ENCODE measurements at regions of chr2 and their contacts with region 1.

Region 1: GRCh38 chr2:219388127-219388844 is 574 bp upstream of the DNPEP start:
- DNase-seq: peak; percentile 100
- ATAC-seq: peak; percentile 81
- H3K4me3 Mint-ChIP-seq: peak overlapping the region; percentile 97
- H3K27ac Mint-ChIP-seq: peak overlapping the region; percentile 82
- H3K4me1 Mint-ChIP-seq: peaks cover 9% of the 10 kb centered on the region
- H3K27me3 Mint-ChIP-seq: no peaks in the 10 kb centered on the region

Region 2: GRCh38 chr2:218568190-218569037 is 819.9 kb before region 1 on chr2 and contains the starts of genes CNOT9 and USP37:
- CTCF ChIA-PET with region 1: no interaction called
- POLR2A ChIA-PET with region 1: no interaction called
- intact Hi-C with region 1: loop called (anchors 1 to 5 kb)
- DNase-seq: peak; percentile 100
- ATAC-seq: peak; percentile 92
- H3K4me3 Mint-ChIP-seq: peak within 1 kb of the TSS; percentile 96
- H3K27ac Mint-ChIP-seq: peak within 1 kb of the TSS; percentile 100
- H3K4me1 Mint-ChIP-seq: peaks cover 58% of the 10 kb centered on the region
- H3K27me3 Mint-ChIP-seq: no peaks in the 10 kb centered on the region
- total RNA-seq, gene CNOT9: 100 to 105 TPM
- total RNA-seq, gene USP37: 42.5 to 46.8 TPM

Region 3: DNA sequence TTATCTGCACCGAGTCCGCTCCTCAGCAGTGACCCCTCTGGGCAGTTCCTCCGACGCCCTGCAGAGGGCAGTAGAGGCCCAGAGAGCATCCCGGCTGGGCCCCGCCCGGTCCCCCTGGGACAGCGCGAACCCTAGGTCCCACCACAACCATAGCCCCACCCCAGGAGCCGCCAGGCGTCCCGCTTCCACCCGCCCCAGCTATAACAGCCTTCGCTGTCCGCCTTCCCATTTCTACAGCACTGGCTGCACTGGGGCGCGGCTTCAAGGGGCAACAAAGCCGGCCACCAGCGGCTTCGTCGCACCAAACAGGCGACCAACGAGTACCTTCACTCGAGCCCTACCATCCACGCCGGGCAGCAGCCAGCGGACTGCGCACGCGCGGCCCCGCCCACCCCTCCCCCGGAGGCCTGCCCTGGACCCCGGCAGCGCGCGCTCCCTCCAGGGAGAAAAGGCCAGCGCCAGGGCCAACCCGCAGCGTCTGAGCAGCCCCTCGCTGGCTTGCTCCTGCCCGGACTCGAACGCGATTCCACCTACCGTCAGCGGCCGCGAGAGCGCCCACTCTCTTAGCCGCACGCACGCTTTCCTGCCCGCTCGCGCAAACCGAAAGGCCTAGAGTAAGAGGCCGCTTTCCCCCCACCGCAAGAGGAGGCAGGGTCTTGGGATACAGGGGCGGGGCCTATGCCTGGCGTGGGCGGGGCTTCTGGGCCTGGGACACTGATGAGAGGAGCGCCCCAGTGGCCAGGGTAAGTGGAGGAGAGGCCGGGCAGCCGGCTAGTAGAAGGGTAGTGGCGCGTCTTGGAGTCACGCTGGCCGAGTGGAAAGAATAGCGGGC is 227.9 kb before region 1 on chr2 and contains the start of gene NHEJ1:
- CTCF ChIA-PET with region 1: interaction called, 3 read pairs
- POLR2A ChIA-PET with region 1: no interaction called
- intact Hi-C with region 1: loop called (anchors 1 to 2 kb)
- DNase-seq: peak; percentile 97
- ATAC-seq: peak; percentile 89
- H3K4me3 Mint-ChIP-seq: peak within 1 kb of the TSS; percentile 81
- H3K27ac Mint-ChIP-seq: peak within 1 kb of the TSS; percentile 88
- H3K4me1 Mint-ChIP-seq: peaks cover 13% of the 10 kb centered on the region
- H3K27me3 Mint-ChIP-seq: no peaks in the 10 kb centered on the region
- total RNA-seq, gene NHEJ1: 20.7 to 23.8 TPM

Region 4: GRCh38 chr2:219245148-219245898 is 143.0 kb before region 1 on chr2 and contains the starts of genes GLB1L and STK16:
- CTCF ChIA-PET with region 1: no interaction called
- POLR2A ChIA-PET with region 1: no interaction called
- intact Hi-C with region 1: loop called in 1 of 2 experiments (anchors 1 kb)
- DNase-seq: peak; percentile 93
- ATAC-seq: peak; percentile 62
- H3K4me3 Mint-ChIP-seq: peak within 1 kb of the TSS; percentile 89
- H3K27ac Mint-ChIP-seq: peak within 1 kb of the TSS; percentile 100
- H3K4me1 Mint-ChIP-seq: peaks cover 59% of the 10 kb centered on the region
- H3K27me3 Mint-ChIP-seq: no peaks in the 10 kb centered on the region
- total RNA-seq, gene GLB1L: 2.7 to 4.2 TPM
- total RNA-seq, gene STK16: 34.3 to 35.4 TPM

Region 5: DNA sequence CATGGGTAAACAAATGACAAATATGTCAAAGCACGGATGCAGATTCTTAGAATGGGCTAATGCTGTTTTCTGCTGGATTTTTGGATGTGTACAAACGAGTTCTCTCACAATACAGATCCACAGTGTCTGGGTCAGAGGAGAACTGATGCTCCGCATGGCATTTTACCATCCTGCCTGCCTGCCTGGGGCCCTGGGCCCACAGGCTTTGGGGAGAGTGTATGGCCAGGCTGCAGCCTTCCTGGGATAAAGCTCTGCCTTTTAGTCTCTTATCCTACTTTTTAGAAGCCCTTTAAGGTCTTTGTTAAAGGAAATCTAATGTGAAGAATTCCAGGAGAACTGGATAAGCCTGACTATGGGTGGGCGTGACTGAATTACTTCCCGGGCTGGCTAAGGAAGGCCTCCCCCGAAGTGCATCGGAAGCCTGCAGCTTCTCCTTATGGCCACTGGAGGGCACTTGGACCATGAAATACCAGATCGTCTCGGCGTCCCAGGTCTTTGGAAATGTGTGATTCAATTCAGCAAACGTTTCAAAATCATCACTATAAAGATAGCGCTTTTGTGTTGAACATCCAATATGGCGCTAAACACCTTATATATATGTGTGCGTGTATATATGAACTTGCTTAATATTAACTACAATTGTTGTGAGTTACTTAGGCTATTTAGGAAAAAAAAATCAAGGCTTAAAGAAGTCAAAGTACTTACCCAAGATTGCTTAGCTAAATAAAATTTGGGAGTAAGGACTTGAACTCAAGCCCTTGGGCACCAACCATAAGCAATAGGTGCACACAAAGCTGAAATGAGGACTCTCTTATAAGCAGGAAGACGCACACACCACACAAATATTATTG is 14.6 kb after region 1 on chr2:
- CTCF ChIA-PET with region 1: interaction called, 61 read pairs
- POLR2A ChIA-PET with region 1: no interaction called
- intact Hi-C with region 1: no loop called
- DNase-seq: peak; percentile 78
- ATAC-seq: peak; percentile 95
- H3K4me3 Mint-ChIP-seq: no peak overlapping the region
- H3K27ac Mint-ChIP-seq: no peak overlapping the region
- H3K4me1 Mint-ChIP-seq: peaks cover 1% of the 10 kb centered on the region
- H3K27me3 Mint-ChIP-seq: peaks cover 2% of the 10 kb centered on the region

Region 6: DNA sequence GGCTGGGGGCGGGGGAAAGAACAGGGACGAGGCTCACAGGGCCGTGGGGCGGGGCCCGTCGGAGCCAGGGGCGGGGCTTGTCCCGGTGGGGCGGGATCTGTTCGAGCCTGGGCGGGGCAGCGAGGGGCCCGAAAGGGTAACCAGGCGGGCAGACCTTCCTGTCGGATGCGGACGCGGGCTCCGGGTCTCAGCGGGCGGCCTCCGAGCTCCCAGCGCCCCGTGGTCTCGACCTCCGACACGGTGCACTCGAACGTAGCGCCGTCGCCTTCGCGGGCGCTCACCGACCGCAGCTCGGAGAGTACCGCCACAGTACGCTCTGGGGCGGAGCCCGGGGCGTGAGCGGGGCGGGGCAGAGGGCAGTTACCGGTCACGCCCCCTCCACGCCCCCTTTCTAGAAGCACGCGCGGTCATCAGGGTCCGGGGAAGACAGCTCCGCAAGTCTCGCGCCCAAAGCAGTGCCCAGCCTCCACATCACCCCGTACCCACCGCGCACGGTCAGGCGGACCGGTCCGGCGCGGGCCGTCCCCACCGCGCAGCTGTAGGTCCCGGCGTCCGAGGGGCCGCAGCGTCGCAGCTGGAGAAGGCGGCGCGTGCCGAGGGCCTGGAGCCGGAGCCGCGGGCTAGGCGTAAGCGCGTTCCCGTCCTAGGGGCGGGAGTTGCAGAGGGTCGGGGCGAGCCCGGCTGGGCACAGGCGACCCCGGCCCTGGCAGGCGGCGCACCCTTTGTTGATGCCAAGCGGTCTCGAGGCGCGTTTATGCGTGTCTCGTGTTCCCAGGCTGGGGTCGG is 164.3 kb after region 1 on chr2:
- CTCF ChIA-PET with region 1: interaction called, 3 read pairs
- POLR2A ChIA-PET with region 1: no interaction called
- intact Hi-C with region 1: loop called in 1 of 2 experiments (anchors 1 kb)
- DNase-seq: peak; percentile 89
- ATAC-seq: peak; percentile 94
- H3K4me3 Mint-ChIP-seq: peak overlapping the region; percentile 66
- H3K27ac Mint-ChIP-seq: no peak overlapping the region
- H3K4me1 Mint-ChIP-seq: peaks cover 5% of the 10 kb centered on the region
- H3K27me3 Mint-ChIP-seq: peaks cover 31% of the 10 kb centered on the region

Region 7: DNA sequence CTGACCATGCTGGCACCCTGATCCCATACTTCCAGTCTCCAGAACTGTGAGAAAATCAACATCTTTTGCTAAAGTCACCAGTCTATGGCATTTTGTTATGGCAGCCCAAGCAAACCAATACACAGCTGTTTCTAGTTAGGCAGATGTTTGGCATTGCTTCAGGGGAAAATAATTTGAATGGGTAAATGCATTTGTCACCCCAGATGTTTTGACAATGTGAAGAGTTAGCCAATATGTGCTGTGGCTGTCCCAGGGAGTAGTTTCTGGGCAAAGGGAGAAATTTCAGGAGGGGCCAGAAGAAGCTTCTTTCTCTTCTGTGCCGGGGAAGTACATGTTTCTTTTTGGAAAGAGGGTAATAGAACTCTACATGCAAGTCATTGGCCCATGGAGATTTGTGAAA is 858.1 kb after region 1 on chr2:
- CTCF ChIA-PET with region 1: no interaction called
- POLR2A ChIA-PET with region 1: no interaction called
- intact Hi-C with region 1: no loop called
- DNase-seq: no peak
- ATAC-seq: no peak
- H3K4me3 Mint-ChIP-seq: no peak overlapping the region
- H3K27ac Mint-ChIP-seq: no peak overlapping the region
- H3K4me1 Mint-ChIP-seq: no peaks in the 10 kb centered on the region
- H3K27me3 Mint-ChIP-seq: no peaks in the 10 kb centered on the region